Uterus (tissue), 4 donors: ENCODE measurements at regions of chr1 and their contacts with region 1.

Region 1: DNA sequence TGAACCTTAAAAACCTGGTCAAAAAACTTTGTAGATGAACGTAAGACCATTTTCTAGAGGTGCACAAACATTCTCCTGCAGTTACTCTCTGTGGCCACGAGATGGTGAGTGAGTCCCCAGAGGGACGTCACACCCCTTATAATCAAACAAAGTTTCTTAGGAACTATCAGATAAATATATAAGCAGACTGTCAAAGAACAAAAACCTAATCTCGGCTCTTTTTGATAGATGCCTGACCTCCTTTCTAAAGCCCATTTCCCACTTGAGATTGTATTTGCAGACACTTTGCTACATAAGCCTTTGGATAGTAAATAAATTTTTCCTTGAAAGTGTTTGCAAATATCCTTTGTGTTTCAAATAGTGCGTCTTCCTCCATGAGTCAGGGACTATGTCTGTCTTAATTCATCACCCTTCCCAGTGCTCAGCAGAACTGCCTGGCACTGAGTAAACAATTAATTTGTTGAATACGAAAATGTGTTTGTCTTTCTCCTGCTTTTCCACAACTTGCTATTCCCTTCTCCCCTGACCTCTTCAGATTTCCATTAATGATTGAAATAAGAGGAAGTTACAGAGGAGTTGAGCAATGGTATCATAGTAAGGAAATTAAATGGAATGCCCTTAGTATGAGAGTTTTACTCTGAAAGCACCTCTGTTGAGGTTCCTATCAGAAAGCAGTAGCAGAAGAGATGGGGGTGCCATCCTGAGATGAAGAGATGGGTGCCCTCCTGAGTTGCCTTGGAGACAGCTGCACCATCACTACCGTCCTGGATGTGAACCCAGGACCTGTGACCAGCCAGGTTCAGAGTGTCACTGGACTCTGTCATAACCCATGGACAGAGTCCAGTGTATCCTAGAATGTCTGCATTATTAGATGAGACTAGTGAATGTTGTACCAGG is 57.8 kb upstream of the RAVER2 start:
- DNase-seq: no peak
- H3K4me3 ChIP-seq: no peak overlapping the region
- H3K27ac ChIP-seq: peak overlapping the region in 1 of 2 donors; percentile 19
- H3K4me1 ChIP-seq: no peaks in the 10 kb centered on the region
- H3K27me3 ChIP-seq: no peaks in the 10 kb centered on the region
- CTCF ChIP-seq: peak; percentile 59 to 76 (median 70)
- POLR2A ChIP-seq: no peak

Region 2: DNA sequence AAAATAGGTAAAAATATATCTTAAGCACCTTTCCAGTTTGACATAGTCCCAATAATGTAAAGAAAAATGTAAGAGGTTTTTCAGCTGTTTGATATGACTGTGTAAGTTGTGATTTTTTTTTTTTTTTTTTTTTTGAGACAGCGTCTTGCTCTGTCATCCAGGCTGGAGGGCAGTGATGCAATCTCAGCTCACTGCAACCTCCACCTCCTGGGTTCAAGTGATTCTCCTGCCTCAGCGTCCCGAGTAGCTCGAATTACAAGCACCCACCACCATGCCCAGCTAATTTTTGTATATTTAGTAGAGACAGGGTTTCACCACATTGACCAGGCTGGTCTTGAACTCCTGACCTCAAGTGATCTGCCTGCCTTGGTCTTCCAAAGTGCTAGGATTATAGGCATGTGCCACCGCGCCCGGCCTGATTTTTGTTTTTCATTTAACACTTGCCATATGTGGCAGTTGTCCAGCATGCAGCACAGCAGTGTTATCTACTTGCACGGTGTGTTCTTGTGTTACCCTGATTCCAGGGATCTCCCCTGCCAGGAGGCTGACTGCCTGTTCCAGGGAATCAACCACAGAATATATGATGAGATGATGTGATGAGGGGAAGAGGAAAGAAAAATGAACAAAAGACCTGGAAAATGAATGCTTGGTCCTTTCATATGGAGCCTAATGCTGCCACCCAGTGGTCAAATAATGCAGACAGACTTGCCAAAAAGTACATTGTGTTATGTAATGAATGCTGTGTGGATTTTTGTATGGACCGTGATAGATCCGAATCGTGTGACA is 136.8 kb after region 1 on chr1:
- intact Hi-C with region 1: loop called (anchors 10 kb)
- DNase-seq: peak; percentile 53 to 77
- H3K4me3 ChIP-seq: no peak overlapping the region
- H3K27ac ChIP-seq: no peak overlapping the region
- H3K4me1 ChIP-seq: no peaks in the 10 kb centered on the region
- H3K27me3 ChIP-seq: no peaks in the 10 kb centered on the region
- CTCF ChIP-seq: peak; percentile 74 to 89 (median 80)
- POLR2A ChIP-seq: no peak